WTC11 (cell line): ENCODE measurements at regions of chr3 and their contacts with region 1.

Region 1: GRCh38 chr3:51549041-51549735 is 10.7 kb downstream of the RAD54L2 start:
- DNase-seq: no peak
- ATAC-seq: no peak
- H3K4me3 Mint-ChIP-seq: no peak overlapping the region
- H3K27ac Mint-ChIP-seq: no peak overlapping the region
- H3K4me1 Mint-ChIP-seq: peaks cover 9% of the 10 kb centered on the region
- H3K27me3 Mint-ChIP-seq: no peaks in the 10 kb centered on the region
- CTCF ChIP-seq: no peak

Region 2: DNA sequence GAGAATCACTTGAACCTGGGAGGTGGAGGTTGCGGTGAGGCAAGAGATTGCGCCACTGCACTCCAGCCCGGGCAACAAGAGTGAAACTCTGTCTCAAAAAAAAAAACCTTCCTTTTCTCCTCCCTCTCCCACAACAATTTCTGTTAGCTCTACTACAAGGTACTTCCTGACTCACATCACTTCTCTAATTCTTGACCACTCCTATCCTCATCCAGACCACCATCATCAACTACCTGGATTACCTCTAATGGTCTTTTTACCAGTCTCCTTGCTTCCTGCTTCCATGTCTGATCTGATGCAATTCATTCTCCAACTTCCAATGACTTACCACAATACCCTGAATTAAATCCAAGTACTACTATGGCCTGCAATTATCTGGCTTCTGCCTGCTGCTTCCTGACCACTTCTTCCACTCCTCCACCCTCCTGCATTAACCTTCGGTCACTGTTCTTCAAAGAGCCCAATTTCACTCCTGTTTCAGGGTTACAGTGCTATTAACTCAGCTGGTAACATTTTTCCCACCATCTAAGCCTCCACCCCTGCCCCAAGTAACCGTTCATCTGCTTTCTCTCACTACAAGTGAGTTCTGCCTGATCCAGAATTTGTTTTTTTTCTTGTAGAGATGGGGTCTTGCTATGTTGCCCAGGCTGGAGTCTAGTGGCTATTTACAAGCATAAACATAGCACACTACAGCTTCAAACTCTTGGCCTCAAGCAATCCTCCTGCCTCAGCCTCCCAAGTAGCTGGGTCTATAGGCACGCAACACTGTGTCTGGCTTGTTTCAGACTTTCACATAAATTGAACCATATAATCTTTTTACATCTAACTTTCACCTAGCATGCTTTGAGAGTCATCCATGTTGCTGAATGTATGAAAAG is 77.2 kb before region 1 on chr3:
- CTCF ChIA-PET with region 1: no interaction called
- POLR2A ChIA-PET with region 1: interaction called, 10 read pairs
- DNase-seq: no peak
- ATAC-seq: no peak
- H3K4me3 Mint-ChIP-seq: no peak overlapping the region
- H3K27ac Mint-ChIP-seq: no peak overlapping the region
- H3K4me1 Mint-ChIP-seq: no peaks in the 10 kb centered on the region
- H3K27me3 Mint-ChIP-seq: no peaks in the 10 kb centered on the region
- CTCF ChIP-seq: no peak